Activated B cell treated with CpG ODN at 0.5 μM for 24 hours (primary cell): ENCODE measurements at regions of chr2 and their contacts with region 1.

Region 1: DNA sequence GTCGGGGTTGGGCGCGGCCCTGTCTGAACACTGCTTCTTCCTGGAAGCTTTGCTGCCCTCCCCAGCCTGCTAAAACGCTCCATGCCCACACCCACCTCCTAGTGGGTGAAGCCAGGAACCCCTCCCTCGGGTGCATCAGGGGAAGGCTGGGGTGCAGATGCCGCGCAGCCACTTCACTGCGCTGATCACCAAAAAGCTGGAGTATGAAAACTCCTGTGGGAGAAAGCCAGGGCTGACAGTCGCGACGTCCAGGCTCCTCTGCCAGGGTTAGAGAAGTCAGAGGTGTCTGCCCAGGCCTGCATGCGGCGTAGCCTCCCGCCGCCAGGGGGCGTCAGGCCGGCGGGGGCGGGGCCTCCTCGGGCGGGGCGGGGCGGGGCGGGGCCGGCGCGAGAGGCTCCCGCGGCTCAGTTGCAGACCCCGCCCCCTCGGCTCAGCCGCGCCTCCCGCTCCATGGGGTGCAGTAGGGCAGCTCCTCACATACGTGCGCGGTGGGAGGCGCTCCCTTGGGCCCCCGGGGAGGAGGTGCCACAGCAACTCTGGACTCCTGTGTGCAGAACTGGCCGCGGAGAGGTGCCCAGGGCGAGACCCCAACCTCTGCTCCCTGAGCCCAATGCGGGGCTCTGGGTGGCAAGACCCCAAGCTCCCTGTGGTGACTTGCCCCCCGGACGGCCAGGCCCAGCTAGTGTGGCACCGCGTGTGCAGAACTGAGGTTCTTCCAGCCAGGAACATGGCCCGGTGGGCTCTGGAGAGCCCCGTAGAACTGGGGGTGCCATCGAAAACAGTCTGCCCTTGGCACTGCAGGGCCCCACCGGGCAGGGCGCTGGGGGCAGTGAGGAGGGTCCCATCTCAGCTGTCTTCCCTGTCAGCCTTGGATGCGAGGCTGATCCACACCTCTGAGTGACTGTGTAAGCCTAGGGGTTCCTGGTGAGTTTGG is 1.8 kb upstream of the RNPEPL1 start:
- DNase-seq: peak; percentile 85
- ATAC-seq: peak; percentile 65
- H3K4me3 Mint-ChIP-seq: peak overlapping the region; percentile 88
- H3K27ac Mint-ChIP-seq: peak overlapping the region; percentile 96
- H3K4me1 Mint-ChIP-seq: peaks cover 85% of the 10 kb centered on the region
- H3K27me3 Mint-ChIP-seq: no peaks in the 10 kb centered on the region
- CTCF ChIP-seq: peak; percentile 56

Region 2: GRCh38 chr2:240513549-240514287 is 52.8 kb before region 1 on chr2:
- CTCF ChIA-PET with region 1: interaction called, 22 read pairs
- POLR2A ChIA-PET with region 1: interaction called, 12 read pairs
- intact Hi-C with region 1: loop called (anchors 1 kb)
- DNase-seq: peak; percentile 71
- ATAC-seq: peak; percentile 99
- H3K4me3 Mint-ChIP-seq: peak overlapping the region; percentile 28
- H3K27ac Mint-ChIP-seq: peak overlapping the region; percentile 59
- H3K4me1 Mint-ChIP-seq: peaks cover 17% of the 10 kb centered on the region
- H3K27me3 Mint-ChIP-seq: no peaks in the 10 kb centered on the region
- CTCF ChIP-seq: peak; percentile 23

Region 3: DNA sequence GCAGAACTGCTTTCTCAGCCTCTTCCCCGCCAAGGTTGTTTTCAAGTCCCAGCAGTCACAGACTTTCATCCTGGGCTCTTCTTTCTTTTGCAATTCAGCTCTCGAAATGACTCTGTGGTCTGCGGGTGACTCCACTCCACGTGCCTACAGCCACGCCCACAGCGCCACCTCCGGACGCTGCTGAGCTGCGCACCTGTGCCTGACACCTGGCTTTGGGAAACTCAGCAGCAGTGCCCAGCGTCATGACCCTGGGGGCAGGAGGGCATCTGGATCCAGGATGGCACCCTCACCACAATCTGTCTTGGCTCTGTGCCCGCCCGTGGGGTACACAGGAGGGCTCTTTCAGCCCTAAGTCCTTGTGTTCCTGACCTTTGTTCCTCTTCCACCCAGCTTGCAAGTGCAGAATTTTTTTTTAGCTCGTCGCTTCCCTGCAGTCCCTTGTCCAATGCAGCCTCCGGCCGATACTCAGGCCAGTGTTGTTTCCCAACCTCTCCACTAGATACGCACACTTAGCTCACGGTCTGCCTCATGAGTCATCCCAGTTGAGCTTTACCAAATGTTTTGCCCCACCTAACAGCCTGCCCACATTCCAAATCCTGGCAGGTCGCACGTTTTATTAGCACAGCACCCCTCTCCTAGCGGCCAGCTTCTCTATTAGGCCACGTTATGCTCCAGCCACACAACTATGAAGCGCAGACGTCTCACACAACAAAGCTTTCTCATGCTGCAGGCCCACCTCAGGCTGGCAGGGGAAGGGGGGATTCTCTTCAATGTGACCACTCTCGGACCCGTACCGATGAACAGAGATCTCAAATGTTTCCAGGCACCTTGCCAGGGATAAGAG is 13.5 kb after region 1 on chr2:
- CTCF ChIA-PET with region 1: interaction called, 52 read pairs
- POLR2A ChIA-PET with region 1: interaction called, 536 read pairs
- intact Hi-C with region 1: no loop called
- DNase-seq: peak; percentile 38
- ATAC-seq: peak; percentile 25
- H3K4me3 Mint-ChIP-seq: no peak overlapping the region
- H3K27ac Mint-ChIP-seq: peak overlapping the region; percentile 68
- H3K4me1 Mint-ChIP-seq: peaks cover 44% of the 10 kb centered on the region
- H3K27me3 Mint-ChIP-seq: no peaks in the 10 kb centered on the region
- CTCF ChIP-seq: no peak

Region 4: DNA sequence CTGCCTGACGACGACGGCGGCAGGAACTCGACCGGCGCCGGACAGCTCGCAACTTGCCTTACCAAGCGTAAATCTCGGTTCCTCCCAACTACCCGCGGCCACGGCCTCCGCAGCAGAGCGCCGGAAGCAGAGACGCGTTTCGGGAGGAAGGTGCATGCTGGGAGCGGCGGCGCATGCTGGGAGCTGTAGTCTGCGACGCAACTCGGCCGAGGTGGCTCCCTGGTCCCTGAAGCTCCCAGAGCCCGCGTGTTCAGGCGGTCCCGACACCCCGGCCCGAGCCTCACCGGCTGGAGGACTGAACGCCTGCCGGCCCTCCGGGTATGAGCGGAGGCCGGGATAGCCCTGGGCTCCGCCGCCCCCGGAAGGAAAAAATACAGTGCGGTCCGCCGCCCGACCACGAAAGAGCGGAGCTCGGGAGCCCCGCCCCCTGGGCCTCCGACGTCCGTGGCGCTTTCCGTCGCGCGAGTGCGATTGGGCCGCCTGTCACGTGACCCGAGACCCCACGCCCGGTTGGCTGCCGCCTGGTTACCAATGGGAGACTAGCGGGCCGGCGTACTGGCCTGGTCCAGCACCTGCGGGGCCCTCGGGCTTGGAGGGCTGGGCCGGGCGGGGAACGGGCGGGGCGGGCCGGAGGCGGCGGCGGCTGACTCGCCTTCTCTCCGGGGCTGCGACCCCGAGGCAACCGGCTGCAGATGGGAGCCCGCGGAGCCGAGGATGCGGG is 19.9 kb after region 1 on chr2 and contains the start of gene CAPN10:
- CTCF ChIA-PET with region 1: interaction called, 52 read pairs
- POLR2A ChIA-PET with region 1: interaction called, 536 read pairs
- intact Hi-C with region 1: loop called (anchors 1 kb)
- DNase-seq: peak; percentile 96
- ATAC-seq: peak; percentile 71
- H3K4me3 Mint-ChIP-seq: peak within 1 kb of the TSS; percentile 95
- H3K27ac Mint-ChIP-seq: peak within 1 kb of the TSS; percentile 96
- H3K4me1 Mint-ChIP-seq: peaks cover 58% of the 10 kb centered on the region
- H3K27me3 Mint-ChIP-seq: no peaks in the 10 kb centered on the region
- CTCF ChIP-seq: no peak
- total RNA-seq, gene CAPN10: 55.2 and 61.8 TPM in 2 replicates

Region 5: GRCh38 chr2:240832205-240832727 is 265.8 kb after region 1 on chr2:
- CTCF ChIA-PET with region 1: no interaction called
- POLR2A ChIA-PET with region 1: no interaction called
- intact Hi-C with region 1: loop called (anchors 1 kb)
- DNase-seq: peak; percentile 89
- ATAC-seq: peak; percentile 94
- H3K4me3 Mint-ChIP-seq: peak overlapping the region; percentile 55
- H3K27ac Mint-ChIP-seq: no peak overlapping the region
- H3K4me1 Mint-ChIP-seq: peaks cover 5% of the 10 kb centered on the region
- H3K27me3 Mint-ChIP-seq: peaks cover 18% of the 10 kb centered on the region
- CTCF ChIP-seq: no peak

Region 6: DNA sequence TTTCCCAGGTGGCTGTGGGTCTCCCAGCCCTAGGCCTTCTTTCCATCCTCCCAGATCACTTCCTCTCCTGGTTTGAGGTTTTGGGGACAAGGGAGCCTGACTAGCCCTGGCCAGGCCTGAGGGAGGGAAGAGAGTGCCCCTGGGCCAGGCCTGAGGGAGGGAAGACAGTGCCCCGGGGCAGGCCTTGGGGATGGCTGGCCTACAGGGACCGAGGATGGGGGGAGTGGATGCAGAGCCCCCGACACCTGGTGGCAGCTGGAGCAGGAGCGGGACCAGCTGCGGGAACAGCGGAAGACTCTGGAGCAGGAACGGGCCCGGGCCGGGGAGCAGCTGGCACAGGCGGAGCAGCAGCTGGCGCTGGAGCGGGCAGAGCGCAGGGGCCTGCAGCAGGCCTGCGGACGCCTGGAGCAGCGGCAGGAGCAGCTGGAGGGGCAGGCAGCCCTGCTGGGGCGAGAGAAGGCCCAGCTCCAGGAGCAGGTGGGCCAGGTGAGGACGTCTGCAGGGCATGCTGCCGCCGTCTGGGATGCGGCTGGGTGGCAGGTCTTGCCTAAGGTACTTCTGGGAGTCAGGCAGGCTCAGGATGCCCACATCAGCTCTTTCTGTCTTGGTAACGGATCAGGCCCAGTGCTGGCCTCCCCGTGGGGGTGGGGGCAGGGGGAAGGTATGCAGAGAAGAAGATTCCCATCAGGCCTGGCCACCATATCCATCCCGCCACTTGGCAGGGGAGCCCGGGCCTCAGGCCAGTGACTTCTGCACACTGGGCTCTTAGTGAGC is 368.8 kb after region 1 on chr2:
- CTCF ChIA-PET with region 1: no interaction called
- POLR2A ChIA-PET with region 1: no interaction called
- intact Hi-C with region 1: no loop called
- DNase-seq: no peak
- ATAC-seq: no peak
- H3K4me3 Mint-ChIP-seq: no peak overlapping the region
- H3K27ac Mint-ChIP-seq: no peak overlapping the region
- H3K4me1 Mint-ChIP-seq: no peaks in the 10 kb centered on the region
- H3K27me3 Mint-ChIP-seq: no peaks in the 10 kb centered on the region
- CTCF ChIP-seq: no peak